Psoas muscle (tissue), 8 donors: ENCODE measurements at regions of chr22 and their contacts with region 1.

Region 1: DNA sequence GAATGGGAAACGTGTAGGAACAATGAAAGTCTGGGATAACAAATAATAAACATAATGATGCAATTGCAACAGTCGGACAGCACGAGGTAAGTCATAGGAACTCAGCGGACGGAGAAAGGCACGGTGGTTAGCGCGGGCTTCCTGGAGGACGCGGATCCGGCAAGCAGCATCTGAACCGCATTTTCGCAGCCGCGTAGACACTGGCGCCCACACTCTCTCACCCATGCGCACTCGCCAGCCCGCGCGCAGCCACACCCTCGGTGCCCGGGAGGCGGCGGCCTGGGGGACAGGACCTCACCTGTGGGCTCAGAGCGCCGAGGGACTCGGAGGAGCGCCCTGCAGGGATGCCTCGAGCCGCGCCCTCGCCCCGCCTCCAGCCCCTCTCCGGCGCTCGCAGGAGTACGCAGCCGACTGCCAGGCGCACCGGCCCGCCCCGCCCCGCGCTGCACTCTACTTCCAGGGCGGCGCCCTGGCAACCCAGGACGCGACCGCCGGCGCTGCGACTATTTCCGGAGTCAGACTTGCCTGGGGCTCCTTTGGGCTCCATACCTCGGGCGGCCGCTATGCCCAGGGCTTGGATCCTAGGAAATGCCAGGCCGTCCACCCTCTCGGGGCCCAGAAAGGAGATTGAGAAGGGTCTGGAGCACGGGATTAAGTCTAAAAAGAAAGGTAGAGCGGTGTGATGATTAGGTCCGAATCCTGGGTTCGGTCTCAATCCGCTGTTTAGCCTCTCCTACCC is at the start of gene TTLL1:
- DNase-seq: peak; percentile 90 to 93
- ATAC-seq: peak; percentile 94 to 99 (median 96)
- H3K4me3 ChIP-seq: peak within 1 kb of the TSS; percentile 76
- H3K27ac ChIP-seq: peak within 1 kb of the TSS; percentile 46
- H3K4me1 ChIP-seq: no peaks in the 10 kb centered on the region
- H3K27me3 ChIP-seq: no peaks in the 10 kb centered on the region
- CTCF ChIP-seq: no peak
- total RNA-seq, gene TTLL1: 1.2 to 3.0 (median 2.0) TPM

Region 2: DNA sequence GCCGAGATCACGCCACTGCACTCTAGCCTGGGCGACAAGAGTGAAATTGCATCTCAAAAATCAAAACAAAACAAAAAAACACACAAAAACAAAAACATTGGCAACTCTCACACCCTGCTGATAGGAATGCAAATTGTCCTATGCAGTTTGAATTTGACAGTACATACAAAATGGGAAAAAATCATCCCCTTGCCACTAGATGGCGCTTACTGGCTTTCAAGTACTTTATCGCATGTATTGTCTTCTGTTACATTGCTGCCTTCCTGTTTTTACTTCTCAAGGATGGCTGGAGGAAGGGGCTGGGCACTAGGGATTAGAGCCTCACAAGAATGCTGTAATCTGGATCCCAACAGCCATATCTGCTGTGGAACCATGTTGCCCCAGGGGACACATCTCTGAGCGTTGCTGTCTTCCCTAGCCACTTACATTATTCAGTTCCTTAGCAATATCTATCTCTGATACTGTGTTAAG is 309.0 kb before region 1 on chr22:
- intact Hi-C with region 1: loop called in 1 of 2 experiments (anchors 10 kb)
- DNase-seq: no peak
- ATAC-seq: peak; percentile 80 to 97 (median 90)
- H3K4me3 ChIP-seq: no peak overlapping the region
- H3K27ac ChIP-seq: no peak overlapping the region
- H3K4me1 ChIP-seq: no peaks in the 10 kb centered on the region
- H3K27me3 ChIP-seq: no peaks in the 10 kb centered on the region
- CTCF ChIP-seq: peak; percentile 86

Region 3: DNA sequence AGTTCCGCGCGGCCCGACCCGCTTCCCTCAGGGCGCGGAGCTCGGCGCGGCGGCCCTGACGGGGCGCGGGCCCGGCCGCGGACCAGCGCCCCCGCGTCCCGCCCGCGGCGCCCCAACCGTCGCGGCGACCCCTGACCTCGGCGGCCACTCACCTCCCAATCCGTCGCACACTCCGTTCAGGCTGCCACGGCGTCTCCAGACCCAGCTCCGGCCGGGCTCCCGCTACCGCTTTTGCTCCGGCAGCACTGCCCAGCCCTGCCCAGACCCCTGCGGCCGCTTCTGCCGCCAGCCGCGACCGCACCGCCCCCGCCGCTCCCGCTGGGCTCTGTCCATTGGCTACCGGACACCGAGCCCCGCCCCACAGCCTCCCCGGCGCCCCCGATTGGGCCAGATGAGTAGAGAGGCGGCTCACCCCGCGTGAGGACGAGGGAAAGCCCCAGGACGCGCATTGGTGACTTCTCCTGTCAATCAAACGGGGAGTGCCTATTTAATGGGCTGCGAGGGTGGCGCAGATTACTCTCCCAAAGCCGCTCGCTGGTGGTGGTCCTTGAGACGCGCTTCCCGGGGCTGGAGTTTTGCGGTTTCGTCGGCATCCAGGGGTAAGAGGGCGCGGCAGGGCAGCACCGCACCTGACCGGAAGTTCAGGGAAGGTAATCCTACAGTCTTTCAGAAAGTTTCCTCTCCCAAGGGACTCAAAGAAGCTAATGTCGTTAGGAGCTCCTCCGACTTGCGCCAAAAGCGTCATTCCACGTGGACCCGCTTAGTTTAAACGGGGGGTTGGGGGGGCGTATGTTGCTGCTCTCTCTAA is 74.1 kb before region 1 on chr22 and contains the start of gene PACSIN2:
- intact Hi-C with region 1: loop called in 1 of 2 experiments (anchors 5 kb)
- DNase-seq: peak; percentile 100
- ATAC-seq: peak; percentile 98 to 100 (median 98)
- H3K4me3 ChIP-seq: peak within 1 kb of the TSS; percentile 80
- H3K27ac ChIP-seq: peak within 1 kb of the TSS; percentile 82
- H3K4me1 ChIP-seq: peaks cover 13% of the 10 kb centered on the region
- H3K27me3 ChIP-seq: no peaks in the 10 kb centered on the region
- CTCF ChIP-seq: no peak
- total RNA-seq, gene PACSIN2: 27.9 to 52.2 (median 38.4) TPM

Region 4: GRCh38 chr22:43118953-43119458 is 29.9 kb after region 1 on chr22:
- intact Hi-C with region 1: no loop called
- DNase-seq: no peak
- ATAC-seq: no peak
- H3K4me3 ChIP-seq: no peak overlapping the region
- H3K27ac ChIP-seq: no peak overlapping the region
- H3K4me1 ChIP-seq: no peaks in the 10 kb centered on the region
- H3K27me3 ChIP-seq: peaks cover 0 to 14% (median 2%) of the 10 kb centered on the region in 3 donors
- CTCF ChIP-seq: no peak

Region 5: GRCh38 chr22:43129426-43130425 is 40.6 kb after region 1 on chr22:
- intact Hi-C with region 1: no loop called
- DNase-seq: no peak
- ATAC-seq: no peak
- H3K4me3 ChIP-seq: no peak overlapping the region
- H3K27ac ChIP-seq: no peak overlapping the region
- H3K4me1 ChIP-seq: peaks cover 6% of the 10 kb centered on the region
- H3K27me3 ChIP-seq: peaks cover 0 to 15% (median 0%) of the 10 kb centered on the region in 3 donors
- CTCF ChIP-seq: no peak